ENCODE measurements at regions of chr3 and their contacts with region 1.

Region 1: DNA sequence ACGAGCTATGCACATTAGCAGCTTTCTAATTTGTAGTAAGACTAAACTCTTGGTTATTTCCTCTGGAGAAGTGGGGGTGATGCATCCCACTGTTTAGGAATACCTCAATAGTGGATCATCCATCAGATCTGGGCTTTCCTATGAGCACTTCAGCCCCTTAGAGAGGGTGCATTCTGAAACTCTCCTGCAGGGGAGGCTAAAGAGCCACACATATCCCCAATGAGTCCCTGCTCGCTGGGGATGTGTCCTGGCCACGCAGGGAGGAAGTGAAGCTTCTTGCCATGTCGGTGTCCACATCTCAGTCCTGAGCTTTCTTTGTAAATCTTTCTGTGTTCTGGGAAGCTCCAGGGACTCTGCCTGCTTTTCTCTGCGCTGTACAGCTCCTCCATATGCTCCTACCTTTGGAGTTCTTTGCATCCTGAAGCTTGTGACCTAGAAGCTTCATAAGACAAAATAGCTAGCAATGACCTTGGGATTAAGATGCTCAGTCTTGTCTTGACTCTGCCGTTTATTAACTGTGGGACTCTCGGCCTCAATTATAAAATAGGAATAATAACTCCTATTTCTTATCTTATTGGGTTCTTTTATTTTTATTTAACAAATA is 28.3 kb upstream of the MASP1 start:
- DNase-seq: peak; percentile 59
- ATAC-seq: peak; percentile 97

Region 2: DNA sequence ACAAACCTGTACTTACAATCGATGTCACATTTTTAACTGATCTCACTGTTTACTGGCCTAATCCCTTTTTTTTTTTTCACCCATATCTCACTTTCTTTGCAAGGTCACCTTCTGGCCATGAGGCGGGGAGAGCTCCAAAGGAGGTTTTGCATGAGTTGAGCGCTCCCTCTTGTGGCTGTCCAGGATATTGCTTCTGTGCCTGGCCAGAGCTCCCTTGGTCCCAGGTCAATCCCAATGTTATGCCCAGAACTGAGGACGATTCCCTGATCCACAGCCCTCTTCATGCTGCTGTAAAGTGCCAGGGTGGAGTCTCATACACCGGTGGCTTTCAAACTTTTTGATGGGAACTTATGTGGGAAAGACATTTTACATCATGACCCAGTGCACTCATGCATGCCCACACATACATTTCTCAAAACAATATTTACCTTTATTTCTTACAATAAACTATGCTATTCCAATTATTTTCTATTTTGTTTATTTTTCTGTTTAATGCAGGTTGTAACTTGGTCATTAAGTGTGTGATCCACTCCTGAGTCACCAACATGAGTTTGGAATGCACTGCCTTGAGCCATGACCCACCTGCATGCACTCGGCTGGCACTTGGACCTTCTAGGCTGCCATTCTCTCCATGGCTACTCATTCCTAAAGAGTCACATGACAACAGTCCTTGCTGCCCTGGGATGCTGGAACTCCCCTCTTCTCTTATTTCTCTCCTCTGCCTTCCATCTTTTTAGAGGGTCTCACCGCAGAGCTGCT is 360.0 kb after region 1 on chr3:
- intact Hi-C with region 1: loop called (anchors 1 kb)
- DNase-seq: peak; percentile 80
- ATAC-seq: peak; percentile 97